ENCODE measurements at regions of chr15 and their contacts with region 1.

Region 1: GRCh38 chr15:63945007-63945788 is 101.1 kb downstream of the DAPK2 start:
- DNase-seq: peak; percentile 11 to 73 (median 58)
- ATAC-seq: peak; percentile 81 to 91 (median 89)
- H3K4me3 ChIP-seq: no peak overlapping the region
- H3K4me3 Mint-ChIP-seq: peak overlapping the region in 1 of 3 donors; percentile 13
- H3K27ac ChIP-seq: no peak overlapping the region
- H3K27ac Mint-ChIP-seq: peak overlapping the region; percentile 8 to 74
- H3K4me1 ChIP-seq: peaks cover 0 to 14% of the 10 kb centered on the region in 2 experiments
- H3K4me1 Mint-ChIP-seq: peaks cover 13 to 28% (median 20%) of the 10 kb centered on the region in 3 donors
- H3K27me3 ChIP-seq: no peaks in the 10 kb centered on the region
- H3K27me3 Mint-ChIP-seq: no peaks in the 10 kb centered on the region

Region 2: DNA sequence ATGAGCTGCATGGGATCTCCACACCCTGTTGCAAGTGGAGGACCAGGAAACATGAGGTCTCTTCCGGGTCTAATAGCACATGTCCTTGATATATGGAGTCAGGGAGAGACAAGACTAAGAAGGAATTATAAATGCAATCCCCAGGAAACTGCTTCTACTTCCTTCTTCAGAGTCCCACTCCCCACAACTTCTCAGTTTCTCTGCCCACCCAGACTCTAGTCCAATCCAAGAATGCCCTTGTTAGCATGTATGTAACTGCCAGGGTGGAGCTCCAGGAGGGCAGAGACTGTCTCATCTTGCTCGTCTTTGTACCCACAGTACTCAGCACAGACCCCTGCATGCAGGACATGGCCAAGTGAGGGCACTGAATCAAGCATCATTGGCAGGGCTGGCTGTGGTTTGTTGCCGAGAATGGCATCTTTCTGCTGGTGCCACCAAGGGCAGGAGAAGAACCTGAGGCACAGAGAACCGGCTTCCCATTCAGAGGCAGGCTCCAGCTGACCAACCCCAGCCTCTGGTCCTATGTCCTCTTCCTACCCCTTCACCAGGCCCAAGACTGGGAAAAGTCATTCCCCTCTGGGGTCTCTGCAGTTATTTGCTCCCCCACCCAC is 92.9 kb after region 1 on chr15:
- CTCF ChIA-PET with region 1: interaction called in 1 of 2 experiments, 11 read pairs
- POLR2A ChIA-PET with region 1: no interaction called
- DNase-seq: no peak
- ATAC-seq: no peak
- H3K4me3 ChIP-seq: no peak overlapping the region
- H3K4me3 Mint-ChIP-seq: no peak overlapping the region
- H3K27ac ChIP-seq: no peak overlapping the region
- H3K27ac Mint-ChIP-seq: peak overlapping the region in 1 of 2 donors; percentile 16
- H3K4me1 ChIP-seq: no peaks in the 10 kb centered on the region
- H3K4me1 Mint-ChIP-seq: peaks cover 0 to 1% (median 0%) of the 10 kb centered on the region in 3 donors
- H3K27me3 ChIP-seq: peaks cover 0 to 2% of the 10 kb centered on the region in 2 experiments
- H3K27me3 Mint-ChIP-seq: no peaks in the 10 kb centered on the region